Right cardiac atrium (tissue), 5 donors: ENCODE measurements at regions of chr10 and their contacts with region 1.

Region 1: DNA sequence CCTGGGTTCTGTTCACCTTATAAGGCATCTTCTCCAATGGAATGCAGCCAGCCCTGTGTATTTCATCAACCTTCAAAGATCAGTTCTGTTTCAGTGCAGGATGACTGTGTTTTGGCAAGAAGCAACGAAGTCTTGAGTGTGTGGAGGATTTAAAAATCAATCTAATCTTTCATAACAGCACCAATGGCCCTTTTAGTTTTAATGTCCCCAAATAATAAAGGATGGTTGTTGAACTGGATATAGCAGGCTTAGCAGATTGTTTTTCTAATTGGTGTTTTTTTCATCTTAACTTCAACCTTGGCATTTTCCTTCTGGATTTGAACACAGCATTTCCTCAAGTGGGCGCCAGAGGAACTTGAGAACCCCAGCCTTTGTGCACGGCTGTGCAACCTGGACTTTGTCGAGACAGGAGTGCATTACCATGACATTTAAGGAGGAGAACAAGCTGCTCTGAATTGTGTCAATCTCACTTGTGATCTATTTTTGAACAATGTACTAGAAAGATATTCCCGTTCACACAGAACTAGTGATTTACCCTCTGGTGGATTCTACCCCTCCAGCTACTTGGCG is 313.3 kb upstream of the AKR1E2 start:
- DNase-seq: peak; percentile 49 to 83 (median 66)
- ATAC-seq: peak; percentile 74 to 77
- H3K4me3 ChIP-seq: no peak overlapping the region
- H3K27ac ChIP-seq: no peak overlapping the region
- H3K4me1 ChIP-seq: peaks cover 5% of the 10 kb centered on the region
- H3K27me3 ChIP-seq: no peaks in the 10 kb centered on the region

Region 2: DNA sequence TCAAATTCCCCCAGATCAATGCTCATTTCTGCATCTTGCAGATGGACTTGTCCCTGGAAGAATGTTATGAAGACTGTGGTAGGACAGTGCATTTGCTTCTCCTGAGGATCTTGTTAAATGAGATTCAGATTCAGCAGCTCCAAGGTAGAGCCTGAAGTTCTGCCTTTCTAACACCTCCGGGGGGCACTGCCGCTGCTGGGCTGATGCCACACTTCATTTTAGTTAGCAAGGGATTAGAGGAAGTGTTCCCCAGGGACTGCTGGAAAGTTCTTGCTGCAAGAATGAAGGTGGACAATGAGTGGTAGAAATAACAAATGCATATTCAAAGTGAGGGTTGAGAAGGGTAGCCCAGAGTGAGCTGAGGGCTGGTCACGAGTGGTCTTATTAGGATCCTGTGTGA is 121.1 kb before region 1 on chr10:
- intact Hi-C with region 1: no loop called
- DNase-seq: no peak
- ATAC-seq: no peak
- H3K4me3 ChIP-seq: no peak overlapping the region
- H3K27ac ChIP-seq: no peak overlapping the region
- H3K4me1 ChIP-seq: no peaks in the 10 kb centered on the region
- H3K27me3 ChIP-seq: no peaks in the 10 kb centered on the region

Region 3: GRCh38 chr10:4546500-4546899 is 33.7 kb after region 1 on chr10:
- intact Hi-C with region 1: no loop called
- DNase-seq: no peak
- ATAC-seq: no peak
- H3K4me3 ChIP-seq: no peak overlapping the region
- H3K27ac ChIP-seq: no peak overlapping the region
- H3K4me1 ChIP-seq: peaks cover 2% of the 10 kb centered on the region
- H3K27me3 ChIP-seq: no peaks in the 10 kb centered on the region

Region 4: DNA sequence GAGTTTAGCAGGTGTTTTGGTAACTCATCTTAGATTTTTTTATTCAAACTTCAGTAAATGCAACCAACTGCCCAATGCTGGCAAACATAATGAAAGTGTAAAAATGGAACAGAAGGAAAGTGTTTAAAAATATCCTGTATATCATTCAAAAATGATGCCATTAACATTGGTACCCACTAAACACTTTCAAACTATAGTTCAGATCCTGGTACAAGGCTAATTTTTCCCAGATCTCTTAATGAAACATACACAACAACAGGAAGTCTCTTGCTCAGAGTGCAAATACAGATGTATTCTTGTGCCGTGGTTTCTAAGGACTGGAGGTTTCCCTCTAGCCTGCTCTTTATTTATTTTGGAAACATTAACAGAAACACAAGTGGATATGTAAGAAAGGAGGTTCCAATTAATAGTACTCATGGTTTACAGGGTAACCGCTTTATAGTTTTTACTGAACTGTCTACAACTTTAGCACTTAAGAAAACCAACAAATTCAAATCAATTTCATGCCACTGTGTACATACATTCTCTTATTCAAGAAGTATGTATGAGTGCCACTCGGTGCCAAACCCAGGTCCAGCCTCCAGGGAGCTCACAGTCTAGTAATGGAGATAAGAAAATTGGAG is 137.2 kb after region 1 on chr10:
- intact Hi-C with region 1: loop called (anchors 5 to 10 kb)
- DNase-seq: no peak
- ATAC-seq: peak in 1 of 2 donors; percentile 51
- H3K4me3 ChIP-seq: no peak overlapping the region
- H3K27ac ChIP-seq: no peak overlapping the region
- H3K4me1 ChIP-seq: peaks cover 2% of the 10 kb centered on the region
- H3K27me3 ChIP-seq: no peaks in the 10 kb centered on the region